CD4-positive, alpha-beta T cell (primary cell): ENCODE measurements at regions of chr10 and their contacts with region 1.

Region 1: GRCh38 chr10:73537288-73537687 is 41.5 kb upstream of the PPP3CB start:
- DNase-seq: peak in 3 of 14 experiments; percentile 13 to 25 (median 14)
- ATAC-seq: peak; percentile 57
- H3K4me3 ChIP-seq: no peak overlapping the region
- H3K4me3 Mint-ChIP-seq: no peak overlapping the region
- H3K27ac ChIP-seq: no peak overlapping the region
- H3K27ac Mint-ChIP-seq: no peak overlapping the region
- H3K4me1 ChIP-seq: peaks cover 7% of the 10 kb centered on the region
- H3K4me1 Mint-ChIP-seq: peaks cover 13% of the 10 kb centered on the region
- H3K27me3 ChIP-seq: no peaks in the 10 kb centered on the region
- H3K27me3 Mint-ChIP-seq: peaks cover 6% of the 10 kb centered on the region
- CTCF ChIP-seq: no peak

Region 2: GRCh38 chr10:71684356-71685173 is 1852.7 kb before region 1 on chr10:
- CTCF ChIA-PET with region 1: no interaction called
- POLR2A ChIA-PET with region 1: no interaction called
- intact Hi-C with region 1: no loop called
- DNase-seq: peak in 3 of 14 experiments; percentile 13 to 44 (median 32)
- ATAC-seq: no peak
- H3K4me3 ChIP-seq: no peak overlapping the region
- H3K4me3 Mint-ChIP-seq: no peak overlapping the region
- H3K27ac ChIP-seq: no peak overlapping the region
- H3K27ac Mint-ChIP-seq: no peak overlapping the region
- H3K4me1 ChIP-seq: peaks cover 4% of the 10 kb centered on the region
- H3K4me1 Mint-ChIP-seq: no peaks in the 10 kb centered on the region
- H3K27me3 ChIP-seq: no peaks in the 10 kb centered on the region
- H3K27me3 Mint-ChIP-seq: no peaks in the 10 kb centered on the region
- CTCF ChIP-seq: no peak

Region 3: DNA sequence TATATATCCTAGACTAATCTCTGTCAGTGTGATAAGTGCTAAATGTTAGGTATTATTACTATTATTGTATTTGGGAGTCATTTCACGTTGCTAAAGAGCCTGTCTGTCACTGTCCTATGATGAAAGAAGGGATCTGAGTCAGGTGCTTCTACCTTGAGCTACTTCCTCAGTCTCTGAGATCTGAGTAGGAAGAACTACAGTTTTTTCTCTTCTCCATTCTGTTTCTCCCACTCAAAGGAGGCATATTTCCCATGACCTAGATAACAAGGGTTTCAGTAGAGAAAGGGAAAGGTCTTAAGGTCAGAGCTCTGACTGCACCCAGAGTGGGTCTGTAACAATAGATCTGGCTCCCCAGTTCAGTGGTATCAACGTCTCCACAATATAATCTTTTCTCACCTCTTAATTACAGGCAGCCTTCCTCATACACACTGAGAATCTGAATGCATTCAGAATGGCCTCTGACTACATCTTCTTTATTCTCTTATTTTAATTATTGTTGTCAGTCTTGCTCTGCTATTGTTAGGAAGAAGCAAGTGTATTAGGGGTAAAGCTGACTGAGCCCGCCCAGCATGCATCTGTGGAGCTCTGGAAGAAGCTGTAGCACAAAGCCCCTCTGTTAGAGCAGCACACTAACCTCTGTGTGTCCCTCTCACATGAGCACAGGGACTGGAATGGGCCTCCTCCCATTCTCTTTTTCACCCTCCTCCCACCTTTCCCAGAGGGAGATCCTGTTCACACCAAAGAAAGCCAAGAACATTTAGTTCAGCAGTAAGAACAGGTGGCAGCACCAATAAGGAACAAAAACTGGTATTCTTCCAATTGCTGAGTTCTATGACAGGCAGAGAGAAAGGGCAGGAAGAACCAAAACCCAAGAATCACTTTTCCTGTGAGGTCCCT is 15.8 kb after region 1 on chr10:
- CTCF ChIA-PET with region 1: no interaction called
- POLR2A ChIA-PET with region 1: no interaction called
- intact Hi-C with region 1: no loop called
- DNase-seq: no peak
- ATAC-seq: no peak
- H3K4me3 ChIP-seq: no peak overlapping the region
- H3K4me3 Mint-ChIP-seq: no peak overlapping the region
- H3K27ac ChIP-seq: no peak overlapping the region
- H3K27ac Mint-ChIP-seq: no peak overlapping the region
- H3K4me1 ChIP-seq: no peaks in the 10 kb centered on the region
- H3K4me1 Mint-ChIP-seq: no peaks in the 10 kb centered on the region
- H3K27me3 ChIP-seq: no peaks in the 10 kb centered on the region
- H3K27me3 Mint-ChIP-seq: no peaks in the 10 kb centered on the region
- CTCF ChIP-seq: no peak

Region 4: GRCh38 chr10:73584737-73585136 is 47.4 kb after region 1 on chr10:
- CTCF ChIA-PET with region 1: no interaction called
- POLR2A ChIA-PET with region 1: no interaction called
- intact Hi-C with region 1: loop called in 1 of 2 experiments (anchors 5 kb)
- DNase-seq: no peak
- ATAC-seq: no peak
- H3K4me3 ChIP-seq: no peak overlapping the region
- H3K4me3 Mint-ChIP-seq: no peak overlapping the region
- H3K27ac ChIP-seq: no peak overlapping the region
- H3K27ac Mint-ChIP-seq: no peak overlapping the region
- H3K4me1 ChIP-seq: no peaks in the 10 kb centered on the region
- H3K4me1 Mint-ChIP-seq: no peaks in the 10 kb centered on the region
- H3K27me3 ChIP-seq: no peaks in the 10 kb centered on the region
- H3K27me3 Mint-ChIP-seq: no peaks in the 10 kb centered on the region
- CTCF ChIP-seq: no peak